PC-9 (cell line): ENCODE measurements at regions of chr11 and their contacts with region 1.

Region 1: DNA sequence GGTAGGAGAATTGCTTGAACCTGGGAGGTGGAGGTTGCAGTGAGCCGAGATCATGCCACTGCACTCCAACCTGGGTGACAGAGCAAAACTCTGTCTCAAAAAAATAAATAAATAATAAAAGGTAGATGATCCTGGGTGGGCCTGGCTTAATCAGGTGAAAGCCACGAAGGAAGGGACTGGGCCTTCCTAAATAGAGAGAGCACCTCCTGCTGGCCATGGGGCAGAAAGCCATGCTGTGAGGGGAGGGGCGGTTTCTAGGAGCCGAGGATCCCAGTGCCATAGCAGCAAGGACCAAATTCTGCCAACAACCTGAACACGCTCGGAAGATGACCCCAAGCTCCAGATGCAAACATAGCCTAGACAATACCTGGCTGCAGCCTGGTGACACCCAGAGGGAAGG is 24.5 kb upstream of the DGKZ start:
- DNase-seq: no peak
- H3K4me3 ChIP-seq: no peak overlapping the region
- H3K27ac ChIP-seq: no peak overlapping the region
- H3K4me1 ChIP-seq: peaks cover 3% of the 10 kb centered on the region
- H3K27me3 ChIP-seq: no peaks in the 10 kb centered on the region
- CTCF ChIP-seq: peak; percentile 44

Region 2: GRCh38 chr11:46332568-46333393 is 10.0 kb after region 1 on chr11:
- CTCF ChIA-PET with region 1: interaction called, 11 read pairs
- POLR2A ChIA-PET with region 1: no interaction called
- intact Hi-C with region 1: no loop called
- DNase-seq: no peak
- H3K4me3 ChIP-seq: no peak overlapping the region
- H3K27ac ChIP-seq: no peak overlapping the region
- H3K4me1 ChIP-seq: peaks cover 39% of the 10 kb centered on the region
- H3K27me3 ChIP-seq: no peaks in the 10 kb centered on the region
- CTCF ChIP-seq: no peak

Region 3: GRCh38 chr11:46367244-46367915 is 44.6 kb after region 1 on chr11:
- CTCF ChIA-PET with region 1: no interaction called
- POLR2A ChIA-PET with region 1: no interaction called
- intact Hi-C with region 1: no loop called
- DNase-seq: peak in 1 of 2 experiments; percentile 67
- H3K4me3 ChIP-seq: no peak overlapping the region
- H3K27ac ChIP-seq: no peak overlapping the region
- H3K4me1 ChIP-seq: peaks cover 20% of the 10 kb centered on the region
- H3K27me3 ChIP-seq: no peaks in the 10 kb centered on the region
- CTCF ChIP-seq: peak; percentile 88

Region 4: DNA sequence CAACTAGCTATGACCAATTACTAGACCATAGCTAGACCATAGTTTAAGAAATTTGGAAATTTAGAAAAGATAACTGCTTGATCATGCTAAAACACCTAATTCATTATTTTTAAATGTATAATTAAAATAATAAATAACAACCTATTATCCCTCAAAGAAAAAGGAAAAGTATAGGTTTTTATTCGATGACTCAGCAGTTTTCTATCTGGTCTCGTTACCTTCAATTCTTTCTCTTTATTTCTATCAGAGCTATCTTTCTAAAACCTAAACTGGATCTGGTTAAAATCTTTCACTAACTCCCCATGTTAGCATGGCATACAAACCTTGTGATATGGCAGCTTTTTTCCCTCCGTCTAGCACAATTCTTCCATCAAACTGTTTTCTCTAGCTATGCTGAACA is 641.1 kb after region 1 on chr11:
- CTCF ChIA-PET with region 1: interaction called, 16 read pairs
- POLR2A ChIA-PET with region 1: no interaction called
- intact Hi-C with region 1: no loop called
- DNase-seq: no peak
- H3K4me3 ChIP-seq: no peak overlapping the region
- H3K27ac ChIP-seq: no peak overlapping the region
- H3K4me1 ChIP-seq: no peaks in the 10 kb centered on the region
- H3K27me3 ChIP-seq: no peaks in the 10 kb centered on the region
- CTCF ChIP-seq: no peak